ENCODE measurements at regions of chr4 and their contacts with region 1.

Region 1: DNA sequence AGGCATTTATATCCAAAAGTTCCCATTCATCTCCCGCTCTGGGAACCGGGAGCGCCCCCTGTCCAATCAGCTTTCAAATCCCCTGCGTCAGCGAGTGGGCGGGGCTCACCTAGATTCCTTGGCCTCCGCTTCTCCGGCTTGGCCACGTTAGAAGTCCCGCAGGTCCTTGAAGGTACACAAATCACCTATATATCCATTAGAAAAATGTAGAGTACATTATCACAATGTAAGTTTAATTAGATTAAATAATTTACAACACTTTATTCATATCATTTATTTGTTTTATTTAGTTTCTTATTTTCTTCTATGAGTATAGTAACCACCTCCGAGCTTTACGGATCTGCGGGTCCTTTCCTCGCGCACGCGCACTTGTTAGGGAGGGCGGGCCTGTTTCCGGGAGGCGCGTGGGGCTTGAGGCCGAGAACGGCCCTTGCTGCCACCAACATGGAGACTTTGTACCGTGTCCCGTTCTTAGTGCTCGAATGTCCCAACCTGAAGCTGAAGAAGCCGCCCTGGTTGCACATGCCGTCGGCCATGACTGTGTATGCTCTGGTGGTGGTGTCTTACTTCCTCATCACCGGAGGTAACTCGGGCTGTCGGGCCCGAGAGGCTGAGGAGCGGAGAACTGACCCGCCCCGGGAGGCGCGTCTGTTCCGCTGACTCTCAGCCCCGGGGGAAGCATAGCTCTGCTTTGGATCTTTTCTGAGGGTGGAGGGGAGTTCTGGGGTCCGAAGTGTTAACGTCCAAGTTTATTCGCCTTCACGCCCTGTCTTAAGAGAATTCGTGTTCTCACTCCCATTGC is at the start of gene OSTC:
- DNase-seq: peak; percentile 93 to 97 (median 96)
- H3K4me3 ChIP-seq: peak within 1 kb of the TSS; percentile 82
- H3K27ac ChIP-seq: peak within 1 kb of the TSS in 1 of 2 donors; percentile 78
- H3K4me1 ChIP-seq: peaks cover 4% of the 10 kb centered on the region
- H3K27me3 ChIP-seq: no peaks in the 10 kb centered on the region
- CTCF ChIP-seq: peak in 1 of 3 donors; percentile 8
- EP300 ChIP-seq: no peak
- POLR2A ChIP-seq: peak; percentile 68
- total RNA-seq, gene OSTC: 52.0 to 98.5 (median 67.1) TPM

Region 2: DNA sequence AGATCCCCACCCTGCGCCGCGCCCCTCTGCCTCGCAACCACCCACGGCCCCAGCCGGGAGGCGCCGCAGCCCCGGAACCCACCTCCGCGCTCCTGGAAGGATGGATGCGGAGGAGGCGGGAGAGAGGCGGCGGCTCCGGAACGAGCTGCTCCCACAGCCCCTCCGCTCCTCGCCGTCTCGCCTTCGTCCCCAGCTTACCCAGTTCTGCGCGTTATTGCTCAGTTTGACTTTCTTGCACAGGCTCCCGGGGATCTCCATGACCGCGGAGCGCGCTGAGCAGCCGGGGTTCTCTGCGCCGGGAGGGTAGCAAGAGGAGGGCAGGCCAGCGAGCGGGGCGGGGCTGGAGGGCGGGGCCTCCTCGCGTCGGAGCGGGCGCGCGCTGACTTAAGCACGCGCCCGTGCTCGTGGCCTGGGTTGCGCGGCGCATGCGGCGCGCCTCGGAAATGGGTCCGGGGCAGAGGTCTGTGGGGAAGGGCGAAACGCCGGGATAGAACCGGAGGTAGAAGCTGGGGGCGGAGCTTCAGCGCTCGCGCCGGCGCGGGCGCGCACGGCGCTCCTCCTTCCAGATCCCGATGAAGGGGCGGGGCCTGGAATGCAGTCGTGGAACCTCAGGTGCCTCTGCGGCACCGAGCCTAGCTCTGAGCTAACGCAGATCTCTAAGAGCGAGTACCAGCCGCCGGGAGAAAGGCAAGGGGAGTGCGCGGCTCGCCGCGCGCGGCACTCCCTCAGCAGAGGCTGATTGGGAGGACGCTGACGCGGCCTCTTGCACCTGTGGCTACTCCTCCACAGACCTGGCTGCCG is 930.3 kb before region 1 on chr4 and contains the start of gene PAPSS1:
- intact Hi-C with region 1: loop called in 1 of 4 experiments (anchors 10 kb)
- DNase-seq: peak; percentile 97 to 99 (median 97)
- H3K4me3 ChIP-seq: peak within 1 kb of the TSS; percentile 94
- H3K27ac ChIP-seq: peak within 1 kb of the TSS; percentile 26 to 84
- H3K4me1 ChIP-seq: peaks cover 5% of the 10 kb centered on the region
- H3K27me3 ChIP-seq: no peaks in the 10 kb centered on the region
- CTCF ChIP-seq: no peak
- EP300 ChIP-seq: no peak
- POLR2A ChIP-seq: peak; percentile 56
- total RNA-seq, gene PAPSS1: 19.8 to 50.3 (median 28.0) TPM

Region 3: GRCh38 chr4:108714863-108715581 is 64.6 kb after region 1 on chr4:
- intact Hi-C with region 1: no loop called
- DNase-seq: no peak
- H3K4me3 ChIP-seq: no peak overlapping the region
- H3K27ac ChIP-seq: no peak overlapping the region
- H3K4me1 ChIP-seq: no peaks in the 10 kb centered on the region
- H3K27me3 ChIP-seq: no peaks in the 10 kb centered on the region
- CTCF ChIP-seq: no peak
- EP300 ChIP-seq: no peak
- POLR2A ChIP-seq: no peak

Measured in ovary (tissue), 10 donors.